Mammary epithelial cell (primary cell): ENCODE measurements at regions of chr20 and their contacts with region 1.

Region 1: DNA sequence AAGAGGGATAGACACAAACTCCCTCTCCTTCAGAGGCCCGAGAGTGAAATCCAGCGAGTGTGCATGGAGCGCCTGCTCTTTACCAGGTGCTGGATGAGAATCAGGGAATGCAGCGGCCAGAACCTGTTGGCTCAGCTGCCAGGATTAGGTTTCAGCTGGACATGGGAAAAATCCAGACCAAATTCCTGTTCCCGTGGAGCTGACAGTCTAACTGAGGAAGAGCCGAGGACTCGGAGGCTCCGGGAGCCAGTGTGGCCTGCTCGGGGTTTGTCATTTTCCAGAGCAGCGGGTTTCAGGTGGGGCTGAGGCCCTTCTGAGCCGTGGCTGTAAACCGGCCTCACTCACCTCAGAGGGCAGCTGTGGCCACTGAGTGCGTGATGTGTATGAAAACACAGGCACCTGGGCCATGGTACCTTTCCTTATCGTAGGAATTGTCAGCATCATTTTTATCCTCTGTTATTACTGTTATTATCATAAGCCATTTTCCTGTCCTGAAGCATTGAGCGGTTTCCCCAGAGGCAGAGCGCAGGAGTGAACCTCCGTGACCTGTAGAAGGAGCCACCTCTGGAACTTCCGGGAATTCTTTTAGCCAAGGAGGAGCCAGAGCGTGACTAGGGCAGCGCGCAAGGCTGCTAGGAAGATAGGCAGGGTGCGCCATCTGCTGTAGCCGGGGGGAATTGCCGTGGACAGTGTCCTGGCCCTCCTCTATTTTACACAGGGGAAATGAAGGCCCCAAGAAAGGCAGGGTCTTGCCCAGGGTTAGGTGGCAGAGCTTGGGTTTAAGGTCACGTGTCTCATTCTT is 27.3 kb downstream of the PKIG start:
- DNase-seq: peak; percentile 83
- H3K4me3 ChIP-seq: peak overlapping the region in 1 of 3 experiments; percentile 38
- H3K27ac ChIP-seq: peak overlapping the region; percentile 79
- H3K4me1 ChIP-seq: peaks cover 17% of the 10 kb centered on the region
- H3K27me3 ChIP-seq: no peaks in the 10 kb centered on the region
- CTCF ChIP-seq: peak; percentile 99 to 100

Region 2: GRCh38 chr20:44210422-44211176 is 399.1 kb before region 1 on chr20 and contains the start of gene OSER1:
- CTCF ChIA-PET with region 1: no interaction called
- dilution Hi-C with region 1: no loop called
- in situ Hi-C with region 1: loop called (anchors 10 to 25 kb)
- intact Hi-C with region 1: no loop called
- DNase-seq: peak; percentile 98
- H3K4me3 ChIP-seq: peak within 1 kb of the TSS; percentile 76 to 99 (median 97)
- H3K27ac ChIP-seq: peak within 1 kb of the TSS; percentile 97
- H3K4me1 ChIP-seq: peaks cover 39% of the 10 kb centered on the region
- H3K27me3 ChIP-seq: no peaks in the 10 kb centered on the region
- CTCF ChIP-seq: no peak
- total RNA-seq, gene OSER1: 18.5 to 29.5 TPM

Region 3: DNA sequence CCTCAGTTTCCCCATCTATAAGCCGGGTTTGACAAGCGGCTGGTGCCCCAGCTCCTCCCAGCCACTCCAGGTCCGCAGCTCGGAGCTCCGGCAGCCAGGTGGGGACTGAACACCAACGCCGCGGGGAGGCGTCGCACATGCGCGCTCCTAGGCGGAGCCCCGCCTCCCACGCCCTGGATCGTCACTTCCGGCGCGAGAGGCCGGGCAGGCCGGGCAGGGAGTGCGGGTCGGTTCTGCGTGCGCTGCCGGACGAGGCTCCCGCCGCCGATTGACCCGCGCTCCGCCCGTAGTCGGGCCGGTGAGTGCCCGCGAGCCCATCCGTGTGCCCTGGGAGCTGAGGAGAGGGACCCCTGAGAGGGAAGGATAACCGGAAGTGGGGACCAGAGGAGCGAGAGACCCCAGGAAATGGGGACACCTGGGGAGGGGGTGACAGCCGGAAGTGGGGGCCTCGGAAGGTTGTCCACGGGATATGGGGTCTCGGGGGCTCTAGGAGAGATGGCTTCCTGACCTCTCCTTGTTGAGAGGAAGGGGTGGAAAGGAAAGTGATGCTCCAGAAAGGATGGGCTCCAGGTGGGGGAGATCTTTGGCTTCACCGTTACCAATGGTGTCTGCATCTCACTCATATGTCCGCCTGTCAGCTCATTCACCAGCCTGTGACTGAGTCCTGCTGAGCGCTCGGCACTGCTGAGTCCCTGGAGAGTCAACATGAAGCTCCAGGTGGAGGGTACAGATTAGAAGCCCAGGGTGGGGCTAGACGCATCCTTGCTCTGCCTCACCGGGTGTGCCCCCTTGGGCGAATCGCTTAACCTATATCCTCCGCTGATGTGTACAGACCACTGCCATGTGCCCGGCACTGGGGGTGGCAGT is 133.8 kb before region 1 on chr20 and contains the start of gene TTPAL:
- CTCF ChIA-PET with region 1: no interaction called
- dilution Hi-C with region 1: no loop called
- in situ Hi-C with region 1: no loop called
- intact Hi-C with region 1: loop called (anchors 1 kb)
- DNase-seq: peak; percentile 88
- H3K4me3 ChIP-seq: peak within 1 kb of the TSS; percentile 73 to 94 (median 78)
- H3K27ac ChIP-seq: peak within 1 kb of the TSS; percentile 86
- H3K4me1 ChIP-seq: peaks cover 18% of the 10 kb centered on the region
- H3K27me3 ChIP-seq: no peaks in the 10 kb centered on the region
- CTCF ChIP-seq: peak in 1 of 2 donors; percentile 56
- total RNA-seq, gene TTPAL: 59.0 TPM

Region 4: DNA sequence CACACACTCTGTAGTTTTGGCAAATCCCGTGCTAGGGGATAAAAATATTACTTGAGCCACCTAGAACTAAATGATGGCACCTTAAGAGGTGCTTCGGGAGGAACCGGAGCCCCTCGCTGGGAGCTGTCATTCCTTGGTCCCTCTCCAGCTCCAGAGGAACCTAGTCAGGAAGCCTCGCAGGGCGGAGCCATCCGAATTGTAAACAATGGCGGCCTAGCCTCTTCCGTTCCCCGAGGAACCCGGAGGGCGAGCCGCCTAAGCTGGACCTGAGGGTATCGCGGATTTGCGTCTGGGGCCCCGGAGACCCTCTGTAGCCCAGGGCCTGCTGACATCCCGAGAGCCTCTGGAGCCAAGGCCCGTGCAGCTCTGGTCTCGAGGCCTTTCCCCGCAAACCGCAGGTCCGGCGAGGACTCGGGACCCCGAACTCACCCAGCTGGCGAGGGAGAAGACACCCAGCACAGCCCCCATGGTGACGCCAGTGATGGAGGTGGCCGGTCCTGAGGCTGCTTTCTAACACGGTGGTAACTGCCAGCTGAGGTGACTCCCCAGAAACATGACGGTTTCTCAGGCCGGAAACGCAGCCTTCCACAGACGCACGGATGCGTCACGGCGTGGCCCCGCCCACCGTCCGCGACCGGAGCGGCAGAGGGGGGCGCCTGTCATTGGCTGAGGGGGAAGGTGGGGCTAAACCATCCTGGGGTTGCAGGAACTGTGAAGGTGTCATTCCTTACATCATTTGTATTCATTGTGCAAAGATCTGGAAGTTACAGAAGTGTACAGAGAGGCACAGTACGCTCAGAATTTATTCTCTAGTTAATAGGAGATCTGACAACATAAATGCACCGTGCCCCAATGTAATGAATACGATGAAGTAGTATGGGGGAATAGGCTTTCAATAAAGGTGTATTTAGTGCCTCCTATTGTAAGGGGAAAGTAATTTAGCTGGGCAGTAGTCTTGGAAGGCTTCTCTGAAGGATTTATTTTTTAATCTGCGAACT is 87.9 kb before region 1 on chr20 and contains the start of gene SERINC3:
- CTCF ChIA-PET with region 1: no interaction called
- dilution Hi-C with region 1: no loop called
- in situ Hi-C with region 1: no loop called
- intact Hi-C with region 1: loop called (anchors 1 kb)
- DNase-seq: peak; percentile 96
- H3K4me3 ChIP-seq: peak within 1 kb of the TSS; percentile 95 to 99 (median 99)
- H3K27ac ChIP-seq: peak within 1 kb of the TSS; percentile 99
- H3K4me1 ChIP-seq: peaks cover 32% of the 10 kb centered on the region
- H3K27me3 ChIP-seq: no peaks in the 10 kb centered on the region
- CTCF ChIP-seq: peak in 1 of 2 donors; percentile 33
- total RNA-seq, gene SERINC3: 101 to 153 TPM

Region 5: GRCh38 chr20:44572541-44573500 is 36.9 kb before region 1 on chr20:
- CTCF ChIA-PET with region 1: no interaction called
- dilution Hi-C with region 1: no loop called
- in situ Hi-C with region 1: no loop called
- intact Hi-C with region 1: loop called (anchors 1 kb)
- DNase-seq: peak; percentile 85
- H3K4me3 ChIP-seq: no peak overlapping the region
- H3K27ac ChIP-seq: peak overlapping the region; percentile 80
- H3K4me1 ChIP-seq: peaks cover 24% of the 10 kb centered on the region
- H3K27me3 ChIP-seq: no peaks in the 10 kb centered on the region
- CTCF ChIP-seq: no peak

Region 6: DNA sequence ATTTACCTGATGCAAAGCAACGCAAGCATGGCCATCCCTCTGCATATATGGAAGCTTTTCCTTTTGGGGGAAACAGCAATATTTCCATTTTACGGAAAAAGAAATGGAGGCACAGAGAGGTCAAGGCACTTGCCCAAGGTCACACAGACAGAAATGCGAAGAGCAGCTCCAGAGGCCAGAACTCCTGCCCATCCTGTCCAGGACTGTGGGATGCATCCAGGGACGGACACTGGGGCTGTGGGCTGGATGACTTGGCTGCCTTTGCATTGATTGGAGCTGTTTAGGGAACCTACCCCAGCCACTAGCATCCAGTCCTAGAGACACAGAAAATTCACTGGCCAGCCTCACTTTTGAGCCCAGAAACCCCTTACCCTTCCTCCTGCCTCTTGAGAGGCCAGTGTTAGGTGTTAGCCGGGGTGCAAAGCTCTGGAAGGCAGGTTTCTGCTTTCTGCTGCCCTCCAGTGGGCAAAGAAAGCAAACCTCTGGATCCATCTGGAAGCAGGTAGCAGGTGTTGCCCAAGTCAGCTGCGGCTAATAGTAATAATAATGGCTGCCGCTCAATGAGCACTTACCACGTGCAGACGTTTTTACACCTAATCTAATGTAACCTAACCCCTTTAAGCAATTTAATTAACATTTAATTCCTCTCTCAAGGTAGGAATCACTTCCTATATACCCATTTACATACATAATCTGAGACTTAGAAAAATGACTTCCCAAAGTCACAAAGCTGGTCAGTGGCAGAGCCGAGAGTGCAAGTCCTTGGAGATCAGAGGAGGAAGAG is 73.7 kb after region 1 on chr20:
- CTCF ChIA-PET with region 1: no interaction called
- dilution Hi-C with region 1: no loop called
- in situ Hi-C with region 1: no loop called
- intact Hi-C with region 1: loop called (anchors 2 kb)
- DNase-seq: peak; percentile 58
- H3K4me3 ChIP-seq: no peak overlapping the region
- H3K27ac ChIP-seq: no peak overlapping the region
- H3K4me1 ChIP-seq: peaks cover 8% of the 10 kb centered on the region
- H3K27me3 ChIP-seq: no peaks in the 10 kb centered on the region
- CTCF ChIP-seq: peak; percentile 63 to 84